ENCODE measurements at regions of chr9 and their contacts with region 1.

Region 1: GRCh38 chr9:112149211-112149610 is 25.9 kb downstream of the SUSD1 start:
- DNase-seq: no peak
- H3K4me3 ChIP-seq: no peak overlapping the region
- H3K4me3 Mint-ChIP-seq: no peak overlapping the region
- H3K27ac Mint-ChIP-seq: no peak overlapping the region
- H3K4me1 ChIP-seq: no peaks in the 10 kb centered on the region
- H3K4me1 Mint-ChIP-seq: peaks cover 10% of the 10 kb centered on the region
- H3K27me3 ChIP-seq: no peaks in the 10 kb centered on the region
- H3K27me3 Mint-ChIP-seq: no peaks in the 10 kb centered on the region
- CTCF ChIP-seq: no peak

Region 2: DNA sequence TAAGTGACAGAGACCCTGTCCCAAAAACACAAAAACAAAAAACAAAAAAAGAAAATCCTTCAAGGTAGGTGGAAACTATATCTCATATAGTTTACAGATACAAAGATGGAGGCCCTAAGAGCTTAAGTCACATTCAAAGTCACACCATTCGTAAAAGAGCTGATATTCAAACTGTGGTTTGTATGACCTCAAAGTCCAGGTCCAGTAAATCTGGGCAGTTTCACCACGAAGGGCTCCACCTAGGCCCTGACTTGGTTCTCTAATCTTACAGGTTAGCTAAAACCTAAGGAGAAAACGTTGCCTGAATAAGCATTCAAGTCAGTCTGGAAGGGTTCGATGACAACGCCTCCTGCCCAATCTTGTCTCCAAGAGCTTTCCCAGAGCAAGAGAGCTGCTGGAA is 18.2 kb before region 1 on chr9:
- CTCF ChIA-PET with region 1: no interaction called
- POLR2A ChIA-PET with region 1: interaction called, 15 read pairs
- intact Hi-C with region 1: no loop called
- DNase-seq: no peak
- H3K4me3 ChIP-seq: no peak overlapping the region
- H3K4me3 Mint-ChIP-seq: no peak overlapping the region
- H3K27ac Mint-ChIP-seq: no peak overlapping the region
- H3K4me1 ChIP-seq: peaks cover 50% of the 10 kb centered on the region
- H3K4me1 Mint-ChIP-seq: peaks cover 28% of the 10 kb centered on the region
- H3K27me3 ChIP-seq: no peaks in the 10 kb centered on the region
- H3K27me3 Mint-ChIP-seq: no peaks in the 10 kb centered on the region
- CTCF ChIP-seq: no peak

Region 3: DNA sequence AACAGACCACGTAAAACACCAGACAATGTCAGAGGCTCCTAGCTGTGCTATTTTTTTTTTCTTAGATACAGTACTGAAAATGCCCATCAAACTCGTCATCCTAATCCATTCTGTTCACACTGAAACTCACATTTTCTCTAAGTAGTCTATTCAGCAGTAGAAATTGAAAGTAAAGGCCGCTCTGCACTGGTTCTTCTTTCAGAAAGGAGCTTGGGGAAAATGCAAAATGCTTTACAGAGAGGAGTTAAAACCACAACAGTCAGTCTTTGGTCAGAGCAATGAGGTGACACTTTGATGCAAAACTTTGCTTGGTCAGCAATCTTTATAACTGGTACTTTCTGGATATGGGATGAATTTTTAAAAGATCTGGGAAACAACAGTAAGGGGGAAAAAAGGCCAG is 69.7 kb after region 1 on chr9:
- CTCF ChIA-PET with region 1: no interaction called
- POLR2A ChIA-PET with region 1: no interaction called
- intact Hi-C with region 1: no loop called
- DNase-seq: no peak
- H3K4me3 ChIP-seq: no peak overlapping the region
- H3K4me3 Mint-ChIP-seq: no peak overlapping the region
- H3K27ac Mint-ChIP-seq: no peak overlapping the region
- H3K4me1 ChIP-seq: no peaks in the 10 kb centered on the region
- H3K4me1 Mint-ChIP-seq: peaks cover 6% of the 10 kb centered on the region
- H3K27me3 ChIP-seq: no peaks in the 10 kb centered on the region
- H3K27me3 Mint-ChIP-seq: no peaks in the 10 kb centered on the region
- CTCF ChIP-seq: no peak

Region 4: DNA sequence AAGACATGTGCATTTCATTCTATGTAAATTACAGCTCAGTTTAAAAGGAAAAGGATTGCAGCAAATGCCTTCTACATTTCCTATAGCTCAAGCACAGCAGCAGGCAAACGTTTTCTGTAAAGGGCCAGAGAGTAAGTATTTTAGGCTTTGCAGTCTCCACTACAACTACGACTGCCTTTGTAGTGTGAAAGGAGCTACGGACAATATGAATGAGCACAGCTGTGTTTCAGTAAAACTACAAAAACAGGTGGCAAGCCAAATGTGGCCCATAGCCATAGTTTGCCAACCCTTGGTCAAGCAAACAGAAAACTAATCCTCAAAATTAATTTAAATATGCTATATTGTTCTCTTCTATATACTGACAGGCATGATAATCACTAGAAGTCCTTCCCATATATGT is 177.0 kb after region 1 on chr9:
- CTCF ChIA-PET with region 1: no interaction called
- POLR2A ChIA-PET with region 1: no interaction called
- intact Hi-C with region 1: no loop called
- DNase-seq: no peak
- H3K4me3 ChIP-seq: no peak overlapping the region
- H3K4me3 Mint-ChIP-seq: no peak overlapping the region
- H3K27ac Mint-ChIP-seq: no peak overlapping the region
- H3K4me1 ChIP-seq: peaks cover 32% of the 10 kb centered on the region
- H3K4me1 Mint-ChIP-seq: peaks cover 56% of the 10 kb centered on the region
- H3K27me3 ChIP-seq: no peaks in the 10 kb centered on the region
- H3K27me3 Mint-ChIP-seq: no peaks in the 10 kb centered on the region
- CTCF ChIP-seq: no peak

Region 5: GRCh38 chr9:112479221-112479620 is 330.0 kb after region 1 on chr9:
- CTCF ChIA-PET with region 1: no interaction called
- POLR2A ChIA-PET with region 1: no interaction called
- intact Hi-C with region 1: no loop called
- DNase-seq: no peak
- H3K4me3 ChIP-seq: no peak overlapping the region
- H3K4me3 Mint-ChIP-seq: no peak overlapping the region
- H3K27ac Mint-ChIP-seq: no peak overlapping the region
- H3K4me1 ChIP-seq: no peaks in the 10 kb centered on the region
- H3K4me1 Mint-ChIP-seq: no peaks in the 10 kb centered on the region
- H3K27me3 ChIP-seq: no peaks in the 10 kb centered on the region
- H3K27me3 Mint-ChIP-seq: no peaks in the 10 kb centered on the region
- CTCF ChIP-seq: no peak

Measured in Caco-2 (cell line).